B cell (primary cell): ENCODE measurements at regions of chr4 and their contacts with region 1.

Region 1: GRCh38 chr4:152500800-152501434 is 35.0 kb downstream of the FBXW7 start:
- DNase-seq: peak; percentile 88
- ATAC-seq: peak; percentile 75
- H3K4me3 ChIP-seq: no peak overlapping the region
- H3K4me3 Mint-ChIP-seq: peak overlapping the region; percentile 38
- H3K27ac ChIP-seq: peak overlapping the region in 1 of 2 donors; percentile 21
- H3K27ac Mint-ChIP-seq: peak overlapping the region; percentile 75
- H3K4me1 ChIP-seq: peaks cover 0 to 10% of the 10 kb centered on the region in 2 donors
- H3K4me1 Mint-ChIP-seq: peaks cover 31% of the 10 kb centered on the region
- H3K27me3 ChIP-seq: no peaks in the 10 kb centered on the region
- H3K27me3 Mint-ChIP-seq: no peaks in the 10 kb centered on the region
- CTCF ChIP-seq: peak; percentile 96

Region 2: GRCh38 chr4:152408514-152409327 is 92.2 kb before region 1 on chr4:
- CTCF ChIA-PET with region 1: interaction called, 4 read pairs
- POLR2A ChIA-PET with region 1: no interaction called
- intact Hi-C with region 1: loop called (anchors 1 kb)
- DNase-seq: peak; percentile 59
- ATAC-seq: no peak
- H3K4me3 ChIP-seq: no peak overlapping the region
- H3K4me3 Mint-ChIP-seq: no peak overlapping the region
- H3K27ac ChIP-seq: no peak overlapping the region
- H3K27ac Mint-ChIP-seq: no peak overlapping the region
- H3K4me1 ChIP-seq: no peaks in the 10 kb centered on the region
- H3K4me1 Mint-ChIP-seq: peaks cover 4% of the 10 kb centered on the region
- H3K27me3 ChIP-seq: no peaks in the 10 kb centered on the region
- H3K27me3 Mint-ChIP-seq: no peaks in the 10 kb centered on the region
- CTCF ChIP-seq: peak; percentile 71

Region 3: DNA sequence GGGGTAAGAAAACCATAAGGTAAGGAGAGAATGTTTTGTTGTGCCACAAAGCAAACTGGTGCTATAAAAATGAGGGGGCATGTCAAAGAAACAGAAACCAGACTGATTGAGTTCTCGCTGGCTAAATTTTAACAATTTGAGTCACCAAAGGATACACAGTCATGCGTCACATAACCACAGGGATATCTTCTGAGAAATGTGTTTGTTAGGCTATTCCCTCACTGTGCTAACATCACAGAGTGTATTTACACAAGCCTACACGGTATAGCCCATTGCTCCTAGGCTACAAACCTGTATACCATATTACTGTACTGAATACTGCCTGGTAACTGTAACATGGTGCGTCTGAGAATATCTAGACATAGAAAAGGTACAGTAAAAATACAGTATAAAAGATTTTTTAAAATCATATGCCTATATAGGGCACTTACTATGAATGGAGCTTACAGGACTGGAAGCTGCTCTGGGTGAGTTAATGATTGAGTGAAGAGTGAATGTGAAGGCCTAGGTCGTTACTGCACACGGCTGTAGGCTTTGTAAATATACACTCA is 15.1 kb before region 1 on chr4:
- CTCF ChIA-PET with region 1: interaction called, 16 read pairs
- POLR2A ChIA-PET with region 1: no interaction called
- intact Hi-C with region 1: no loop called
- DNase-seq: peak; percentile 25
- ATAC-seq: peak; percentile 74
- H3K4me3 ChIP-seq: no peak overlapping the region
- H3K4me3 Mint-ChIP-seq: peak overlapping the region; percentile 42
- H3K27ac ChIP-seq: no peak overlapping the region
- H3K27ac Mint-ChIP-seq: no peak overlapping the region
- H3K4me1 ChIP-seq: peaks cover 6 to 8% of the 10 kb centered on the region in 2 donors
- H3K4me1 Mint-ChIP-seq: peaks cover 43% of the 10 kb centered on the region
- H3K27me3 ChIP-seq: no peaks in the 10 kb centered on the region
- H3K27me3 Mint-ChIP-seq: no peaks in the 10 kb centered on the region
- CTCF ChIP-seq: no peak

Region 4: GRCh38 chr4:152535903-152536544 is 35.1 kb after region 1 on chr4 and contains the start of gene FBXW7:
- CTCF ChIA-PET with region 1: interaction called, 30 read pairs
- POLR2A ChIA-PET with region 1: interaction called, 6 read pairs
- intact Hi-C with region 1: loop called (anchors 1 kb)
- DNase-seq: peak; percentile 100
- ATAC-seq: peak; percentile 83
- H3K4me3 ChIP-seq: peak within 1 kb of the TSS; percentile 58 to 91 (median 81)
- H3K4me3 Mint-ChIP-seq: peak within 1 kb of the TSS; percentile 98
- H3K27ac ChIP-seq: peak within 1 kb of the TSS; percentile 83 to 88
- H3K27ac Mint-ChIP-seq: peak within 1 kb of the TSS; percentile 96
- H3K4me1 ChIP-seq: peaks cover 27 to 36% of the 10 kb centered on the region in 2 donors
- H3K4me1 Mint-ChIP-seq: peaks cover 67% of the 10 kb centered on the region
- H3K27me3 ChIP-seq: no peaks in the 10 kb centered on the region
- H3K27me3 Mint-ChIP-seq: no peaks in the 10 kb centered on the region
- CTCF ChIP-seq: no peak
- total RNA-seq, gene FBXW7: 117 and 125 TPM in 2 replicates

Region 5: DNA sequence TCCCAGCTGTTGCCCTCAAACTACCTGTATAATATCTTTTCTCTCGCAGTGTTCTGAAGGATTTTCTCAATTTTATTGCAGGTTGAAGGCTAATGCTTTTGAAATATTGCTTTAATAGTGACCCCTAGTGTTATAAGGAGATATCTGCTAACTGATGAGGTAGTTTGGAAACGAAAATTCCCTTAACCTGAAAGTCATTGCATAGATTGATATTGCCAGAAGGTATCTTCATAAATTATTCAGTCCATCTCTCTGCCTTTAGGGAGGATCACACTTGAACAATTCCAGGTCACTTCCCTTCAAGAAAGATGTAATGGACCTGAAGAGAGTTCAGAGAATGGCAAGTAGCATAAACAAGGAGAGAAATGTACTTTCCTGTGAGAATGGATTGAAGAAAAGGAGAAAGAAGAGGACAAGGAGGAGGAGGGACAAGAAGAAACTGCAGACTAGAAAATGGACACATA is 234.5 kb after region 1 on chr4:
- CTCF ChIA-PET with region 1: interaction called, 217 read pairs
- POLR2A ChIA-PET with region 1: no interaction called
- intact Hi-C with region 1: loop called (anchors 1 kb)
- DNase-seq: peak; percentile 64
- ATAC-seq: peak; percentile 57
- H3K4me3 ChIP-seq: no peak overlapping the region
- H3K4me3 Mint-ChIP-seq: no peak overlapping the region
- H3K27ac ChIP-seq: no peak overlapping the region
- H3K27ac Mint-ChIP-seq: no peak overlapping the region
- H3K4me1 ChIP-seq: peaks cover 5 to 12% of the 10 kb centered on the region in 2 donors
- H3K4me1 Mint-ChIP-seq: peaks cover 16% of the 10 kb centered on the region
- H3K27me3 ChIP-seq: no peaks in the 10 kb centered on the region
- H3K27me3 Mint-ChIP-seq: no peaks in the 10 kb centered on the region
- CTCF ChIP-seq: peak; percentile 80